ENCODE measurements at regions of chr5 and their contacts with region 1.

Region 1: DNA sequence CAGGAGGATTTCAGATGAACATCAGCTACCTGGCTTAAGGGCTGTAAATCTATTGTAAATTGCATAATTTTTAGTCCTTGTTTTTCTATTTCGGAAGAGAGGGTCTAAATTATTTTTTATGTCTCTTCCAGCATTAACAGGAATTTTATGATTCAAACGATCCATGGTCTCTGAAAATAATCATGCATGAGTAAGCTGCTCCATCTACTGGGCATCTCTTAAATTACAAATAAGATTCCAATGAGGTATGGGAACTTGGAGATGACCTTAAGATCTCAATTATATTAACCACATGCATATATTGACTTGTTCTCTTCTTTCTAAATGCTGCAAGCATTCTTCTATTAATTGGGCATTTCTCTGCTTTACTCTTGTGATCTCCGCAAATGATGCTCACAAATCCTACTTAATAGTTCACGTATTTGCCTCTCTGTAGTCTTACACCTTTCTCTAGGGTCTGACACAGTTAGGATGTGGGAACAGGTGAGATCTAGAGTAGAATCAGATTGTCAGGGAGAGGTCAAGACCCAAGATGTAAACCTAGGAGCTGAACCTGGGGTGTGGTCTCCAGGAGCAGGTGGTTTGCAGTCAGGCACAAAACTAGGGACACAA is 86.9 kb downstream of the NUDT12 start:
- DNase-seq: no peak
- H3K4me3 ChIP-seq: no peak overlapping the region
- H3K27me3 ChIP-seq: no peaks in the 10 kb centered on the region
- CTCF ChIP-seq: peak; percentile 55

Region 2: DNA sequence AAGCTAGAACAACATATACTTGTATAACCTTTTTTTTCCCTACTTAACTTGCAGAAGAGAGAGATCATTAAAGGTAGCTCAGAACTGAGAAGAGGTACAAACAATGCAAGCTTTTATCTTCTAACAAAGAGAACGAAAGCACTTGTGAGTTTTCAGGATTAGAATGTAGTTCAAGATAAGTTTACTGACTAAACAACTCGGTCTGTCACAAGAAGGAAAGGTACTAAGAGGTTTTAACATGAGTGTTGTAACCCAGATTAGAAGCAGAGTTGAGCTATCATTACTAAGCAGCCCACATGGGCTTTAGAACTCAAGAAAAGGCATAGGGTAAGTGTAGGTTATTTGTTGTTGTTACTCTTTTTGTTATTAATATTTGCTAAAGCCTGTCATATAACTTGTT is 381.0 kb before region 1 on chr5:
- CTCF ChIA-PET with region 1: no interaction called
- POLR2A ChIA-PET with region 1: no interaction called
- DNase-seq: no peak
- H3K4me3 ChIP-seq: no peak overlapping the region
- H3K27me3 ChIP-seq: no peaks in the 10 kb centered on the region
- CTCF ChIP-seq: no peak

Region 3: DNA sequence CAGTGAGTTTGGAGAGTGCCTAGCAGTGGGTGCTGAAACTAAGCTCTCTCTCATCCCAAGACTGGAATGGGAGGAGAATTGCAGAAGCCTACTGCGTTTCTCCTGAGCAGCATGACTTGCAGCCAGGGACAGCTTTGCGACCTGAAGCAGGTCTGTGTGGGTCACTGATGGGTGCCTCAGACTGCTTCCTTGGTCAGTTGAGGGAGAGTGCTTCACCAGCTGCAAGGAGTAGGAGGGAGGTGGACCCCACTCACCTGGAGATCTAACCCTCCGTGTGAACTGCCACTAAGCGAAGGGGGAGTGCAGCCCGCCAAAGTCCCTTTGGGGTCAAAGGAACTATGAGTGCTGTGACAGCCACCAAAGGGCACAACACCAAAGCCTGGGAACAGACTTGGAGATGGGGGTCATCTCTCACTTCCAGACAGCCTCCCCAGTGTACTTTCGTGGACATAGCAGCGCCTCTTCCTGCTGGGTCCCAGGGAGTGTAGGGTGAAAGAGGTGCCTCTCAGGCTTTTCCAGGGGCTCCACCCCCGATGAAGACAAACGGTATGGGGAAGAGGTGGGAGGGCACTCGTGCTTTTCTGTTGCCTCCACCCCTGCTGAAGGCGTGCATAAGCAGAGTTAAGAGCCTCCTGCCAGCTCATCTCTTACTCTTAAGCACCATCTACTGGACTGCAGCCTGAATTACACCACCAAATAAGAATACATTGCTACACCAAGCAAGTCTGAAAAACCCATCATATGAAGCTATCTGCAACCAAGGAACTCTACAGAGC is 251.4 kb before region 1 on chr5:
- CTCF ChIA-PET with region 1: interaction called, 64 read pairs
- POLR2A ChIA-PET with region 1: no interaction called
- DNase-seq: no peak
- H3K4me3 ChIP-seq: peak overlapping the region; percentile 15
- H3K27me3 ChIP-seq: no peaks in the 10 kb centered on the region
- CTCF ChIP-seq: peak; percentile 78

Region 4: DNA sequence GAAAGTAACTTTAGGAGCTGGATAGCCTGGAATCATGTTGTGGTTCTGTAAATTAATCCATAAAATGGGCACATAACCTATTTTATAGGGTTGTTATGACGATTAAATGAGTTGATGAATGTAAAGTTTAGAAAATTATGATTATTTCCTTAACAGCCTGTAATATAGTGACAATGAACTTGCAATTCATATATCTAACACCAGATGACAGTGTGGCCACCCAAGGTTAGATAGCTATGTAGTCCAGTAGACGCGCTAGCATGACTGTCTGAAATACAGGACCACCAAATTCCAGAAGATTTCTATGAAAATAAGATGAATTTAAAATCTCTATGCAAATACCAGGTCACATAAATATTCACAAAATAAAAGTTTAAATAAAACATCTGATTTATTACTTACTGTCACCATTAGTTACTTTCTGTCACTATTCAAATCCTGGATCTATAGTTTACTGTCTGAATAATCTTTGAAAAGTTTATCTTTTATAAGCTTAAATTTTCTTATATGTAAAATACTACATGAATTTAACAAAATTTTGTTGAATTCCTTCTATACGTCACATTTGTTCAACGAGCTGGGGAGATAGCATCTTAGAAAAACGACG is 243.2 kb before region 1 on chr5:
- CTCF ChIA-PET with region 1: interaction called, 64 read pairs
- POLR2A ChIA-PET with region 1: no interaction called
- DNase-seq: no peak
- H3K4me3 ChIP-seq: no peak overlapping the region
- H3K27me3 ChIP-seq: no peaks in the 10 kb centered on the region
- CTCF ChIP-seq: peak; percentile 76

Region 5: DNA sequence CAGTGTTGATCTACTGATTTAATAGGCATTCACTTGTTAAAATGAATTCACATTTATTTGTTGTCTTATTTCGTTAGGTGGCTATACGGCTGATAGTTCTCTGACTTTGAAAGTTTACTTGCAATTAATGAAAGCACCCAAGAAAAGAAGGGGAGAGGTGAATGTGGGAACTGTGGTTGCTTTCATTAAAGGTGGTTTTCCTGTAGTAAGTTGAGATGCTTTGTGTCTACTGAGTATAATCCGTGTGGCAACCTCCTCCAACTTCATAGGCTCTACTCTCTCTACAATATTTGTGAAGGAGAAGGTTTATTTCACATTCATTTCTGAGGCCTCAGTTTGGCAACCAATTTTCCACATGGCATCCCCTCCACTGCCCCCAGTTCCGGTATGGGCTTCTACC is 230.0 kb before region 1 on chr5:
- CTCF ChIA-PET with region 1: interaction called, 10 read pairs
- POLR2A ChIA-PET with region 1: no interaction called
- DNase-seq: no peak
- H3K4me3 ChIP-seq: no peak overlapping the region
- H3K27me3 ChIP-seq: no peaks in the 10 kb centered on the region
- CTCF ChIP-seq: no peak

Region 6: GRCh38 chr5:103258368-103258956 is 217.3 kb before region 1 on chr5 and contains the start of gene MACIR:
- CTCF ChIA-PET with region 1: interaction called, 50 read pairs
- POLR2A ChIA-PET with region 1: no interaction called
- DNase-seq: peak; percentile 89
- H3K4me3 ChIP-seq: peak within 1 kb of the TSS; percentile 67
- H3K27me3 ChIP-seq: no peaks in the 10 kb centered on the region
- CTCF ChIP-seq: 0 out of 2 replicates have a peak, but pooled peaks have one; percentile 18
- polyA plus RNA-seq, gene MACIR: 29.1 and 35.1 TPM in 2 replicates

Region 7: GRCh38 chr5:103393101-103393754 is 82.5 kb before region 1 on chr5:
- CTCF ChIA-PET with region 1: interaction called, 14 read pairs
- POLR2A ChIA-PET with region 1: no interaction called
- DNase-seq: peak; percentile 37
- H3K4me3 ChIP-seq: no peak overlapping the region
- H3K27me3 ChIP-seq: no peaks in the 10 kb centered on the region
- CTCF ChIP-seq: peak; percentile 32; the same call in 1 of the 2 replicates

Region 8: DNA sequence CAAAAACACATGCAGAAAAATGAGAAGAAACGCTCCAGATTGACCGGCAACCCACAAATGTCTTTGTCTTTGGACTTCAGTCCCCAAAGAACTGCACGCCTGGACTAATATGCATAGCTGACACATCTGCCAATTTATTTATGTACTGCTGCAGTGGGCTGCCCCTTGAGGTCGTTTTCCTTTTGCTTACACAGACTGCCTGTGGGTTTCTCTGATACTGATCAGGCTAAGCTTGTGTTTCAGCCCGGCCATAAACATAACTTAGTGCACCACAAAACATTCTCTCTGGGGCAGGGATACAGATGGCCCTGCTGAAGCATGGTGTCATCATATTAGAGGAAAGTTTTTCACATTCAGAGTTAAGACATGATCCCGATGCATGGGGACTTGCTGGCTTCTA is 11.5 kb after region 1 on chr5:
- CTCF ChIA-PET with region 1: interaction called, 20 read pairs
- POLR2A ChIA-PET with region 1: no interaction called
- DNase-seq: peak; percentile 71
- H3K4me3 ChIP-seq: no peak overlapping the region
- H3K27me3 ChIP-seq: no peaks in the 10 kb centered on the region
- CTCF ChIP-seq: peak; percentile 21; the same call in 1 of the 2 replicates

Region 9: GRCh38 chr5:103526164-103526915 is 50.6 kb after region 1 on chr5:
- CTCF ChIA-PET with region 1: no interaction called
- POLR2A ChIA-PET with region 1: no interaction called
- DNase-seq: no peak
- H3K4me3 ChIP-seq: no peak overlapping the region
- H3K27me3 ChIP-seq: no peaks in the 10 kb centered on the region
- CTCF ChIP-seq: no peak

Measured in BJ (cell line).